ENCODE measurements at regions of chr2 and their contacts with region 1.

Region 1: GRCh38 chr2:85266146-85267041 is 61.4 kb downstream of the TGOLN2 start:
- DNase-seq: peak in 1 of 2 experiments; percentile 91
- H3K4me3 ChIP-seq: no peak overlapping the region
- H3K27ac ChIP-seq: no peak overlapping the region
- H3K4me1 ChIP-seq: peaks cover 13 to 23% (median 21%) of the 10 kb centered on the region in 4 experiments; a peak in 6 of 7 replicates
- H3K27me3 ChIP-seq: no peaks in the 10 kb centered on the region
- CTCF ChIP-seq: peak; percentile 83 to 85 (median 85)
- EP300 ChIP-seq: no peak
- POLR2A ChIP-seq: no peak
- RAD21 ChIP-seq: peak; percentile 62 to 76

Region 2: GRCh38 chr2:85288244-85288725 is 21.9 kb after region 1 on chr2:
- CTCF ChIA-PET with region 1: interaction called, 137 read pairs
- POLR2A ChIA-PET with region 1: interaction called, 3 read pairs
- DNase-seq: no peak
- H3K4me3 ChIP-seq: no peak overlapping the region
- H3K27ac ChIP-seq: no peak overlapping the region
- H3K4me1 ChIP-seq: peaks cover 0 to 14% (median under 1%) of the 10 kb centered on the region in 4 experiments; a peak in 2 of 7 replicates
- H3K27me3 ChIP-seq: no peaks in the 10 kb centered on the region
- CTCF ChIP-seq: no peak
- EP300 ChIP-seq: no peak
- POLR2A ChIP-seq: no peak
- RAD21 ChIP-seq: no peak

Measured in H1 (cell line).